CD4-positive, alpha-beta T cell (primary cell): ENCODE measurements at regions of chr11 and their contacts with region 1.

Region 1: DNA sequence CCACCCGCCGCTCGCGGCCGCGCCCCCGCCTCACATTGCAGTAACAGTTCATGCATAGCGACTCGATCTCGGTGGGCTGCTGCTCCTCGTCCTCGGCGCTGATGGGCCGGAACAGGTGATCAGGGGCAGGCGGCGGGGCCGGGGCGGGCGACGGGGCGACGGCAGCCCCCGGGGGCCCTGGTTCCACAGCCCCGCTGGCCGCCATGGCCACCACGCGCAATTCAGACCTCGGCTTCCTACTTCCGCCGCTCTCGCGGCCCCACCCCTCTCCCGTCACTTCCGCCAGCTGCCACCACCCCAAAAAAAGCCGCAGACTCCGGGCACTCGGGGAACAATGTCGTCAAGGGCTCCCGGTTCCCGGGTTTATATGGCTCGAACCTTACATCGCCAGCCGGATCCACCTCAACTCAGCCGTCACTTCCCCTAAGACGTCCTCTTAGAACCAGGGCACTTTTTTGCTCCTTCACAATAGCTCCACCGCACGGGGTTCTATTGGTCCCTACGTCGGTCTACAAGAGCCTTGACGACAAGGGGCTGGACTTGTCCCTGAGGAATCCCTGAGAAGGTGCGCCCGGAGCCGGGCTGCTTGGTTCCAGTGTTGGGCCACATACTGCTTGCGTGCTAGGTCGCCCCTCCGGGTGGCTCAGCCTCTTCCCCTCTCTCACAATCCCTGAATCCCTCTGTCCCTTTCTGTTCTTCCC is at the start of gene ZPR1:
- DNase-seq: peak; percentile 71 to 92 (median 84)
- ATAC-seq: peak; percentile 82
- H3K4me3 ChIP-seq: peak within 1 kb of the TSS; percentile 85
- H3K4me3 Mint-ChIP-seq: peak within 1 kb of the TSS; percentile 94
- H3K27ac ChIP-seq: peak within 1 kb of the TSS; percentile 63 to 79
- H3K27ac Mint-ChIP-seq: peak within 1 kb of the TSS; percentile 96
- H3K4me1 ChIP-seq: peaks cover 46% of the 10 kb centered on the region
- H3K4me1 Mint-ChIP-seq: peaks cover 52% of the 10 kb centered on the region
- H3K27me3 ChIP-seq: no peaks in the 10 kb centered on the region
- H3K27me3 Mint-ChIP-seq: no peaks in the 10 kb centered on the region
- CTCF ChIP-seq: no peak
- total RNA-seq, gene ZPR1: 117 to 118 TPM

Region 2: DNA sequence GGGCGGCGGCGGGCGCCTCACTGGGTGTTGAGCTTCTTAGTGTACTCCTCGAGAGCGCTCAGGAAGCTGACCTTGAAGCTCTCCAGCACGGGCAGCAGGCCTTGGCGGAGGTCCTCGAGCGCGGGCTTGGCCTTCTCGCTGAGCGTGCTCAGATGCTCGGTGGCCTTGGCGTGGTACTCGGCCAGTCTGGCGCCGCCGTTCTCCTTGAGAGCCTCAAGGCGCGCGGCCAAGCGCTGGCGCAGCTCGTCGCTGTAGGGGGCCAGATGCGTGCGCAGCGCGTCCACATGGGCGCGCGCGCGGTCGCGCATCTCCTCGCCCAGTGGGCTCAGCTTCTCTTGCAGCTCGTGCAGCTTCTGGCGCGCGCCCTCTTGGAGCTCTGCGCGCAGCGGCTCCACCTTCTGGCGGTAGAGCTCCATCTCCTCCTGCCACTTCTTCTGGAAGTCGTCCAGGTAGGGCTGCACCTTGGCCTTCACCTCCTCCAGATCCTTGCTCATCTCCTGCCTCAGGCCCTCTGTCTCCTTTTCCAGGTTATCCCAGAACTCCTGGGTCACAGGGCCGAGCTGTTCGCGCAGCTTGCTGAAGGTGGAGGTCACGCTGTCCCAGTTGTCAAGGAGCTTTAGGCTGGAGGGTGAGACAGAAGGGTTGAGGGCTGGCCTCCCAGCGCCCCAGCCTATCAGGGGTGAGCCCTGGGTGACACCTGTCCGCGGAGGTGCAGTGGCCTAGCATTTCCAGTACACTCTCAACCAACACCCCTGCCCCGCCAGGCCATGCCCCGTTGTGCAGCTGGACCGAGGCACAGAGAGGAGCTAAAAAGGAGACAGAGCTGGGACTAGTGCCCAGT is 48.1 kb after region 1 on chr11:
- CTCF ChIA-PET with region 1: interaction called, 11 read pairs
- POLR2A ChIA-PET with region 1: interaction called, 20 read pairs
- intact Hi-C with region 1: loop called (anchors 1 kb)
- DNase-seq: peak; percentile 69 to 92 (median 78)
- ATAC-seq: peak; percentile 97
- H3K4me3 ChIP-seq: peak overlapping the region; percentile 63
- H3K4me3 Mint-ChIP-seq: peak overlapping the region; percentile 84
- H3K27ac ChIP-seq: no peak overlapping the region
- H3K27ac Mint-ChIP-seq: peak overlapping the region; percentile 58
- H3K4me1 ChIP-seq: peaks cover 18% of the 10 kb centered on the region
- H3K4me1 Mint-ChIP-seq: peaks cover 12% of the 10 kb centered on the region
- H3K27me3 ChIP-seq: no peaks in the 10 kb centered on the region
- H3K27me3 Mint-ChIP-seq: no peaks in the 10 kb centered on the region
- CTCF ChIP-seq: peak; percentile 70

Region 3: DNA sequence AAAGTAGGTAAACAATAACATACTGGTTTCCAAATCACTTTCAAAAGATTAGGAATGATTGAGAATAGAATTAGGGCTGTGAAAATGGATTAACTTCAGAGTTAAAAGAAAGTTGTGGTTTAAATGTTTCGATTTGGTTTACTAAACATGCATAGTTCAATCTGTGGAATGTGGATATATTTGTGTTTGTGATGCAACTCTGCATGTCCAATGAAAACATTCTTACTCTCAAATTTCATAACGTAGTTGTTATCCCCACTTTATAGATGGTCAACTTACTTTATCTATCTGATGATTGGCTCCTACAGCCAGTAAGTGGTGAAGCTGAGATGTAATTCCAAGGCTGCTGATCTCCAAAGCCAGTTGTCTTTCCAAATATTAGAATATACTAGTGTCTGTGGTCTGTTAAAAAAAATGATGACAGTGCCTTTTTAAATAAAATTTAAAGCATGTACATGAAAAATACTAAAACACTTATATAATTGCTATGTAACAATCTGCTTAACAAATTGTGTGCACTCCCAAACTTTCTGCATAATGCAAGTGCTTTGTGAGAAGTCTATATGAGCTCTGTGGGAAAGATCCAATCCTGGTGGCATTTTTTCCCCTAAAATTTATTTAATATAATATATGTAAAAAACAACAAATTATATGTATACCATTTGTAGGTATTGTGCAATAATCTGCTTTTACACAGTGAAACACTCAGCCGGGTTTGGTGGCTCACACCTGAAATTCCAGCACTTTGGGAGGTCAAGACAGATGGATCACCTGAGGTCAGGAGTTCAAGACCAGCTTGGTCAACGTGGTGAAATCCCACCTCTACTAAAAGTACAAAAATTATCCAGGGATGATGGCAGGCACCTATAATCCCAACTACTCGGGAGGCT is 320.0 kb after region 1 on chr11:
- CTCF ChIA-PET with region 1: interaction called, 17 read pairs
- POLR2A ChIA-PET with region 1: interaction called, 6 read pairs
- intact Hi-C with region 1: loop called (anchors 1 kb)
- DNase-seq: no peak
- ATAC-seq: no peak
- H3K4me3 ChIP-seq: no peak overlapping the region
- H3K4me3 Mint-ChIP-seq: no peak overlapping the region
- H3K27ac ChIP-seq: no peak overlapping the region
- H3K27ac Mint-ChIP-seq: no peak overlapping the region
- H3K4me1 ChIP-seq: peaks cover 6% of the 10 kb centered on the region
- H3K4me1 Mint-ChIP-seq: no peaks in the 10 kb centered on the region
- H3K27me3 ChIP-seq: no peaks in the 10 kb centered on the region
- H3K27me3 Mint-ChIP-seq: no peaks in the 10 kb centered on the region
- CTCF ChIP-seq: no peak

Region 4: GRCh38 chr11:117226388-117227385 is 438.8 kb after region 1 on chr11:
- CTCF ChIA-PET with region 1: interaction called, 9 read pairs
- POLR2A ChIA-PET with region 1: interaction called, 7 read pairs
- intact Hi-C with region 1: loop called (anchors 2 to 5 kb)
- DNase-seq: peak in 10 of 14 experiments; percentile 17 to 86 (median 40)
- ATAC-seq: peak; percentile 69
- H3K4me3 ChIP-seq: no peak overlapping the region
- H3K4me3 Mint-ChIP-seq: peak overlapping the region; percentile 62
- H3K27ac ChIP-seq: no peak overlapping the region
- H3K27ac Mint-ChIP-seq: peak overlapping the region; percentile 78
- H3K4me1 ChIP-seq: peaks cover 50% of the 10 kb centered on the region
- H3K4me1 Mint-ChIP-seq: peaks cover 48% of the 10 kb centered on the region
- H3K27me3 ChIP-seq: no peaks in the 10 kb centered on the region
- H3K27me3 Mint-ChIP-seq: no peaks in the 10 kb centered on the region
- CTCF ChIP-seq: peak; percentile 82

Region 5: GRCh38 chr11:117327567-117328374 is 539.8 kb after region 1 on chr11 and contains the start of gene CEP164:
- CTCF ChIA-PET with region 1: no interaction called
- POLR2A ChIA-PET with region 1: no interaction called
- intact Hi-C with region 1: loop called in 1 of 2 experiments (anchors 5 kb)
- DNase-seq: peak; percentile 89 to 97 (median 92)
- ATAC-seq: peak; percentile 93
- H3K4me3 ChIP-seq: peak within 1 kb of the TSS; percentile 92
- H3K4me3 Mint-ChIP-seq: peak within 1 kb of the TSS; percentile 69
- H3K27ac ChIP-seq: peak within 1 kb of the TSS; percentile 68 to 92
- H3K27ac Mint-ChIP-seq: peak within 1 kb of the TSS; percentile 59
- H3K4me1 ChIP-seq: peaks cover 23% of the 10 kb centered on the region
- H3K4me1 Mint-ChIP-seq: peaks cover 9% of the 10 kb centered on the region
- H3K27me3 ChIP-seq: no peaks in the 10 kb centered on the region
- H3K27me3 Mint-ChIP-seq: no peaks in the 10 kb centered on the region
- CTCF ChIP-seq: no peak
- total RNA-seq, gene CEP164: 33.0 to 36.7 TPM